ENCODE measurements at regions of chr4 and their contacts with region 1.

Region 1: DNA sequence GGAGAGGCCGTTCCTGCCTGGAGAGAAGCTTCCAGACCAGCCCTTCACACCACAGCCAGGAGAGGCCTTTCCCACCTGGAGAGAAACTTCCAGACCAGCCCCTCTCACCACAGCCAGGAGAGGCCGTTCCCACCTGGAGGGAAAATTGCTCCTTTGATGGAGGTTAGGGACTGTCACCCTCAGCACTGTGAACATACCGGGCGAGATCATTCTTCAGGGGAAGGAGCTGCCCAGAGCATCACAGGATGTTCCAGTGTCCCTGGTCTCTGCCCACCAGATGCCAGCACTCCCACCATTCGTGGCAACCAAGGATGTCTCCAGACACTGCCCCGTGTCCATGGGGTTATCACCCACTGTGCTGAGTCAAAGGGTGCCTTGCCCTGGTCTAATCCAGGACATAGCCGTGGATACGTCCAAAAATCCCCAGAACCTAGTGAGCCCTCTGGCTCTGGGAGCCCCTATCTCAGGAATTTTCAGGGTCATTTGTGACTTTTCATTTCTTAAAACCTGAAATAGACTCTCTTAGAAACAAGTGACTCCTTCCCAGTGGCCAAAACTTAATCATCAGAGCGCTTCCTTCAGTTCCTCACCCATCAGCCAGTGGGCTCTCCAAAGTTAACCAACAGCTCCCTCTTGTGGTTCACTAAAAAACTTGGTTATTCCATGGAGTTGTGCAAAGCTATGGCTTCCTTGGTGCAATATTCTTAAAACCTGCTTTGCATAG is 80.2 kb downstream of the CRMP1 start:
- DNase-seq: peak; percentile 31
- H3K4me3 Mint-ChIP-seq: no peak overlapping the region
- H3K27ac Mint-ChIP-seq: no peak overlapping the region
- H3K4me1 Mint-ChIP-seq: no peaks in the 10 kb centered on the region
- H3K27me3 Mint-ChIP-seq: no peaks in the 10 kb centered on the region

Region 2: DNA sequence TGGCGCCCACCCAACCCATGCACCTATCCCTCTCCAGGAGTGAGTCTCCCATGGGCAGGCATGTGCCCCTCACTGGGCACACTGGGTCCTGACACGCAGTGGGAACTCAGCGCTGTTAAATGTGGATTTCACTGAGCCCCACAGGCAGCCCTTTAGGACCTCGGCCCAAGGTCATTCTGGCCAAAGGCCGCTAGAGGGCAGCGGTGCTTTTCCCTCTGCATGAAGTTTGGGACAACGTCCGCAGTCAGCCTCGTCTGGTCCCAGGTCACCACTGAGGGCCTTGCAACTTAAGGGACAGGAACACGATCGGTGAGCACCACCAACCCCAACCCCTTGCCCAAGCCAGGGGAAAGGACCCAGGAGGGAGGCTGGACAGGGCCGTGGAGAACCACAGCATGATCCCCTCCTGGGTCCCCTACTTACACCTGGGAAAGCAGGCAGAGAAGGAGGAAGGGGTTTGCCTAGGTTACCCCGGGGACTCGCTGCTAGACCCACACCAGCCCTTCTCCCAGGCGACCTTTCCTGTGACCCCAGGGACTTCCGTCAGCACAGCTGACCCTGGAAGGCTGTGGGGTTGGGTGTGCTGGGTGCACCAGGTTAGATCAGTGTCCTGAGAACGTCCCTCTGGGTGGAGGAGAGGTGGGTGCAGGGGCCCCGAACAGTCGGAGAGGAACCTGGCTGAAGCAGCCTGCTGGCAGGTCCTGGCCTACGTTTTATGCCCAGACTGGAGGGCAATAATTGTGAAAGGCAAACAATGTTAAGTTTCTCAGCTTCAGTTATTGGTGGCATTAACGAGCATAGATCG is 817.4 kb before region 1 on chr4:
- CTCF ChIA-PET with region 1: interaction called, 3 read pairs
- intact Hi-C with region 1: loop called (anchors 1 kb)
- DNase-seq: peak; percentile 62
- H3K4me3 Mint-ChIP-seq: no peak overlapping the region
- H3K27ac Mint-ChIP-seq: no peak overlapping the region
- H3K4me1 Mint-ChIP-seq: no peaks in the 10 kb centered on the region
- H3K27me3 Mint-ChIP-seq: peaks cover 16% of the 10 kb centered on the region

Region 3: DNA sequence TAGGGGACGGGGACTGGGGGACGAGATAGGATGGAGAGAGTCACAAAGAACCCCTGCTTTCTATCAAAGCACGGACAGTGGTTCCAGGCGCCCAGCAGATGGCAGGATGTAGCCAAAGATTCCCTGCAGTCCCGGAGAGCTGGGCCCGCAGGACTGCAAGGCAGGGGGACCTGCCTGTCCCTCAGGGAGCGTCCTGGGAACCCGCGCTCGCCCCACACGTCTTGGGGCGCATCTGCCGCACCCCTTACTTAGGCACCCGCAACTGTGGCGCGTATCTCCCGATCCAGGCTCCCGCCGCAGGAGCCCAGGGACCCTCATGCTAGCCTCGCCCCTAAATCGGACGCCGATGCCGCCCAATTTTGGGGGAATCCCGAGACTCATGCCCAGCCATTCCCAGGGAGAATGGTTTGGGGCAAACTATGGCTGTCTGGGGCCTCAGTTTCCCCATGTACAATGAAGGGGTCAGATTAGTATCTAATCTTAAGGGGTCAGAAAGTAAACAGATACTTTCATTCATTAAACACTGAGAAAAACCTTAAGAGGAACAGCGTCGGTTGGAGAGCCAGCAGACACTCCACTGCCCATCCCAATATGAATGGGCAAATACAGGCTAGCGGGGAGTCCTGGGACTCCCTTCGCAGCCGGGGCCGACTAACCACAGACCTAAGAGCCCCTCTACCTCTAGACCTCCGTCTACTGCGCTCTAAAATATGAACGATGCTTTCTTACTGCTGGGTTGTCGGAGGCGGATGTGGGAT is 762.0 kb before region 1 on chr4:
- CTCF ChIA-PET with region 1: no interaction called
- intact Hi-C with region 1: loop called (anchors 1 kb)
- DNase-seq: peak; percentile 63
- H3K4me3 Mint-ChIP-seq: peak overlapping the region; percentile 55
- H3K27ac Mint-ChIP-seq: no peak overlapping the region
- H3K4me1 Mint-ChIP-seq: peaks cover 8% of the 10 kb centered on the region
- H3K27me3 Mint-ChIP-seq: peaks cover 50% of the 10 kb centered on the region

Region 4: GRCh38 chr4:5676763-5677162 is 135.9 kb before region 1 on chr4:
- CTCF ChIA-PET with region 1: no interaction called
- intact Hi-C with region 1: no loop called
- DNase-seq: no peak
- H3K4me3 Mint-ChIP-seq: no peak overlapping the region
- H3K27ac Mint-ChIP-seq: no peak overlapping the region
- H3K4me1 Mint-ChIP-seq: no peaks in the 10 kb centered on the region
- H3K27me3 Mint-ChIP-seq: peaks cover 3% of the 10 kb centered on the region

Region 5: DNA sequence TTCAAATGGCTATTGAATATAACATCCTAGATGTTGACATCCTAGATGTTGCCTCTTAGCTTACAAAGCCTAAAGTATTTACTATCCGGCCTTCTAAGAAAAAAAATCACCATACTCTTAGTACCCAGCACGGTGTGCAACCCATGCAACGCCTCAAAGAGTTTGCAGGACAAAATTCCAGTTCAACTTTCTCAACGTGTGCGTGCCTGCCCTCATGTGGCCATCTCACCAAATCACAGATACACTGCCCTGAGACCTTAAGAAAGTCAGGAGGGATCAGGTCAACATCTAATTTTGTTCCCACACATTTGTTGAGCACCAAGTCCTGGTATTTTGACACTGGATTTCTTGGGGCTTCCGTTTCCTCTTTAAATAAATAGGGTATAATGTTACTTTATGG is 12.0 kb after region 1 on chr4:
- CTCF ChIA-PET with region 1: no interaction called
- intact Hi-C with region 1: no loop called
- DNase-seq: peak; percentile 15
- H3K4me3 Mint-ChIP-seq: no peak overlapping the region
- H3K27ac Mint-ChIP-seq: no peak overlapping the region
- H3K4me1 Mint-ChIP-seq: peaks cover 3% of the 10 kb centered on the region
- H3K27me3 Mint-ChIP-seq: peaks cover 5% of the 10 kb centered on the region